ENCODE measurements at regions of chr6 and their contacts with region 1.

Region 1: GRCh38 chr6:129251669-129252376 is 368.9 kb downstream of the LAMA2 start:
- DNase-seq: peak; percentile 76
- H3K4me3 ChIP-seq: no peak overlapping the region
- H3K27ac ChIP-seq: no peak overlapping the region
- H3K4me1 ChIP-seq: no peaks in the 10 kb centered on the region
- H3K27me3 ChIP-seq: peaks cover 11 to 28% of the 10 kb centered on the region in 2 experiments
- CTCF ChIP-seq: peak; percentile 74 to 76
- POLR2A ChIP-seq: no peak

Region 2: GRCh38 chr6:127855542-127856159 is 1396.2 kb before region 1 on chr6:
- CTCF ChIA-PET with region 1: interaction called, 4 read pairs
- POLR2A ChIA-PET with region 1: no interaction called
- dilution Hi-C with region 1: no loop called
- intact Hi-C with region 1: loop called (anchors 2 kb)
- DNase-seq: peak; percentile 61
- H3K4me3 ChIP-seq: no peak overlapping the region
- H3K27ac ChIP-seq: no peak overlapping the region
- H3K4me1 ChIP-seq: no peaks in the 10 kb centered on the region
- H3K27me3 ChIP-seq: no peaks in the 10 kb centered on the region
- CTCF ChIP-seq: peak; percentile 18 to 45
- POLR2A ChIP-seq: no peak

Region 3: DNA sequence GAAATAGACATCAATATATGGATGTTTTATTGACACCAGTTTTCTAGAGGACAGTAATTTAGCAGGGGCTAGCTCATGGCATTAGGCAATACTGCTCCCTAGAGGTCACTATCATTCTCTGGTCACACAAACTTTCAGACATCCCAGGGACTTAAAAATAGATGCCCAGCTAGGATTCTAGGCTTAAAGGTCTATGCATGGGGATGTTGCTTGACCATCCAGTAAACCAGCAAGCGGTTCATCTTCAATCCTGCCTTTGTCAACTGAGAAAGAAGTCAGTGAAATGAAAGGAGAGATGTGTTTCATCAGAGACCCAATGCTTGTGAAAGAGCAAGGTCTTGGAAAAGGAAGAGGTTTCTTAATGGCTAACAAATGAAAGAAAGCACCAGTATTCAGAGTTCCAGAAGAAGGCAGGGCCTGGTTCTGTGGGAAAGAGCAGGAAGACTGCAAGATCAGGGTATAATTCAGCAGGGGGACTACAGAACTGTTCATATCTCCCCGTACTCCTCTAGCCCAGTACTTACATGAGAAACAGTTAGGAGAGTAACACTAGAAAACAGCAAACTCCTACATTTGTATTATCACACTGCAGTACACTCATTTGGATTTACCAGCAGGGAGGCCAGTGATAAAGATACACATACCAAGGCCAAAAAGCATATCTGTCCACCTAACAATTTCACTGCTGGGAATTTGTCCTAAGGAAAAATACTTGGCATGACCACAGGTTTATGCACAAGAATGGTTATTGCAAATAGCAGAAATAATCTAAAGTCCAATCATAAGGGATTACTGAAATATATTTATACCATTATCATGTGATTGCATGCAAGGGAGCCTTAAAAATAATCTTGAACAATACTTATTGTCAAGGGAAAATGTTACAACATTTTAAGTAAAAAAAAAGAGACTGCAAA is 520.3 kb before region 1 on chr6:
- CTCF ChIA-PET with region 1: interaction called, 19 read pairs
- POLR2A ChIA-PET with region 1: no interaction called
- dilution Hi-C with region 1: no loop called
- intact Hi-C with region 1: loop called (anchors 2 kb)
- DNase-seq: peak; percentile 69
- H3K4me3 ChIP-seq: no peak overlapping the region
- H3K27ac ChIP-seq: no peak overlapping the region
- H3K4me1 ChIP-seq: no peaks in the 10 kb centered on the region
- H3K27me3 ChIP-seq: peaks cover 0 to 5% of the 10 kb centered on the region in 2 experiments
- CTCF ChIP-seq: peak; percentile 51 to 68
- POLR2A ChIP-seq: no peak

Region 4: GRCh38 chr6:128954308-128955043 is 297.3 kb before region 1 on chr6:
- CTCF ChIA-PET with region 1: no interaction called
- POLR2A ChIA-PET with region 1: no interaction called
- dilution Hi-C with region 1: no loop called
- intact Hi-C with region 1: loop called (anchors 5 kb)
- DNase-seq: no peak
- H3K4me3 ChIP-seq: no peak overlapping the region
- H3K27ac ChIP-seq: no peak overlapping the region
- H3K4me1 ChIP-seq: no peaks in the 10 kb centered on the region
- H3K27me3 ChIP-seq: no peaks in the 10 kb centered on the region
- CTCF ChIP-seq: no peak
- POLR2A ChIP-seq: no peak

Region 5: DNA sequence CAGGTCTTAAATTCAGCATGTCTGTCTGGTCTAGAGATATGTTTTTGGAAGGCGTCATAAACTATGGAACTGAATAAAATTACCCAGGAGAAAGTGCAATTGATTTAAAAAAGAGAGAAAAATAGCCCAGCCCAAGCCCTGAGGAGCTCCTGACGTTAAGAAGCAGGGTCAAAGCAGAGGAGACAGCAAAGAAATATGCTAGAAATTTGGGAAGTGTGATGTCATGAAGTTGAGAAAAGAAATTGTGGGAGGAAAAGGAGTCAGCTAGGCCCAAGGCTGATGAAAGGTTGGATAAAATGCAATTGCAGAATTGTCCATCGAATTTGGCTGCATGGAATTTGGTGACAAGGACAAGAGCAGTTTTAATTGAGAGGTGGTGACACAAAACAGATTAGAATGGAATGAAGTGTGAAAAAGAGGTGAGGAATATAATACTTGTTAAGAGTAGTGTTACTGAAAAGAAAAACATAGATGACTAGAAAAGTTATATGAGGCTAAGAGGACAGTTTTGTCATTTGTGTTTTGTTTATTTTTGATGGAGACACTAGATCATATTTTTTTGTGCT is 12.7 kb after region 1 on chr6:
- CTCF ChIA-PET with region 1: interaction called, 20 read pairs
- POLR2A ChIA-PET with region 1: no interaction called
- dilution Hi-C with region 1: no loop called
- intact Hi-C with region 1: no loop called
- DNase-seq: no peak
- H3K4me3 ChIP-seq: no peak overlapping the region
- H3K27ac ChIP-seq: no peak overlapping the region
- H3K4me1 ChIP-seq: no peaks in the 10 kb centered on the region
- H3K27me3 ChIP-seq: peaks cover 6 to 24% of the 10 kb centered on the region in 2 experiments
- CTCF ChIP-seq: no peak
- POLR2A ChIP-seq: no peak

Region 6: GRCh38 chr6:129393654-129394053 is 141.8 kb after region 1 on chr6:
- CTCF ChIA-PET with region 1: no interaction called
- POLR2A ChIA-PET with region 1: no interaction called
- dilution Hi-C with region 1: no loop called
- intact Hi-C with region 1: no loop called
- DNase-seq: no peak
- H3K4me3 ChIP-seq: no peak overlapping the region
- H3K27ac ChIP-seq: no peak overlapping the region
- H3K4me1 ChIP-seq: no peaks in the 10 kb centered on the region
- H3K27me3 ChIP-seq: peaks cover 4 to 10% of the 10 kb centered on the region in 2 experiments
- CTCF ChIP-seq: no peak
- POLR2A ChIP-seq: no peak

Region 7: DNA sequence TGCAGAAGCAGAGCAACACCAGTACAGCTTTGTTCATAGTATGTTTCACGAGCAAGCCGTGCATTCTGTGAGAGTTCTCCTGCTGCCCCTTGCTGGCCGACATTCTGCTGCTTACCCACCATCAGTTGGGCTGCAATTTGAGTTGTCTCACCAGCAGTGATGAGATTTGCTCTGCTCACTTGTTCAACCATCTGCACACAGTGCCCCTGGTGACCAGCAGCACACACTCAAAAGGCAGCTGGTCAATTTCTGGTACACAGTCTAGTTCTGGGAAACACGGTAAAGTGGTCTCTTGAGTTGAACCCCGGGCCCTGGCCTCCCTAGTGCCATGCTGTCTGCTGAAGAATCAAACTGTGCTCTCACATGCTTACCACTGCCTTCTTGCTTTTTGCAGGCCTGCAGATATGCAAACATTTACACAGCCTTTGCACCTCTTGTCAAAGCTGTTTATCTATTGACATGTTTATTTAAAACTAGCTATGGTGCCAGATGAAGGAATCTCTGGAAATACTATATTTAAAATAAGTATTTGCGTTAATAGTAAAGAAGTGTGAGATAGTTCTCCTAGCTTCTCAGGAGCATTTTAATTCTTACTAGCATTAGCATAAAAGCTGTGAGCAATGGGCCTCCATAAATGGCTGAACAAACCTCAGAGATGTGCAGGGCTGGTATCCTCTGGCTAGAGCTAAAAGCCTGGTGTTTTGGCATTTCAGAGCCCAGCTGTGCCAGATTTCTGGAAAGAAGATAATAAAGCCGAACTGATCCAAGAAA is 223.8 kb after region 1 on chr6:
- CTCF ChIA-PET with region 1: no interaction called
- POLR2A ChIA-PET with region 1: no interaction called
- dilution Hi-C with region 1: no loop called
- intact Hi-C with region 1: no loop called
- DNase-seq: no peak
- H3K4me3 ChIP-seq: no peak overlapping the region
- H3K27ac ChIP-seq: no peak overlapping the region
- H3K4me1 ChIP-seq: no peaks in the 10 kb centered on the region
- H3K27me3 ChIP-seq: no peaks in the 10 kb centered on the region
- CTCF ChIP-seq: no peak
- POLR2A ChIP-seq: no peak

Region 8: GRCh38 chr6:129730477-129731165 is 478.8 kb after region 1 on chr6:
- CTCF ChIA-PET with region 1: no interaction called
- POLR2A ChIA-PET with region 1: no interaction called
- dilution Hi-C with region 1: no loop called
- intact Hi-C with region 1: no loop called
- DNase-seq: peak; percentile 63
- H3K4me3 ChIP-seq: no peak overlapping the region
- H3K27ac ChIP-seq: no peak overlapping the region
- H3K4me1 ChIP-seq: peaks cover 7% of the 10 kb centered on the region
- H3K27me3 ChIP-seq: no peaks in the 10 kb centered on the region
- CTCF ChIP-seq: peak; percentile 29 to 40
- POLR2A ChIP-seq: no peak

Region 9: DNA sequence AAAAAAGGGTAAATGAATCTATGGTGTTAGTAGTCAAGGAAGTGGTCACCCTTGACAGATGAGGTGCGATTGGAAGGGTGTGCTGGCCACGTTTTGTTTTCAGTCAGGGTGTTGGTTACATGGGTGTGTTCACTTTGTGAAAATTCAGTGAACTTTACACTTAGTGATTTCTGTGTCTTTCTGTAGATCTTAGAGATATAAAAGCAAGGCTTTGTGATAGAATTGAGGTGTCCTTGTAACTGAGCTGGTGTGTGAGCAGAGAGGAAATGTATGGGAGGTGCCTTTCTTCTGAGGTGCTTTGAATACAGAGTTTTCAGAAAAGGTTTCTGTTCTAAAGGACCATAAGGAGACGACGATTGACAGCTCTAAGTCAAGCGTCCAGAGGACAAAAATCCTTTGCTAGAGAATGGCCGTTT is 880.5 kb after region 1 on chr6:
- CTCF ChIA-PET with region 1: no interaction called
- POLR2A ChIA-PET with region 1: no interaction called
- dilution Hi-C with region 1: no loop called
- intact Hi-C with region 1: no loop called
- DNase-seq: no peak
- H3K4me3 ChIP-seq: no peak overlapping the region
- H3K27ac ChIP-seq: no peak overlapping the region
- H3K4me1 ChIP-seq: peaks cover 38% of the 10 kb centered on the region
- H3K27me3 ChIP-seq: no peaks in the 10 kb centered on the region
- CTCF ChIP-seq: no peak
- POLR2A ChIP-seq: no peak

Measured in endothelial cell of umbilical vein (primary cell).